ENCODE measurements at regions of chr12 and their contacts with region 1.

Region 1: GRCh38 chr12:14716848-14717444 is 20.5 kb upstream of the GUCY2C start:
- DNase-seq: peak; percentile 52
- H3K4me3 ChIP-seq: no peak overlapping the region
- H3K27ac ChIP-seq: no peak overlapping the region
- H3K4me1 ChIP-seq: no peaks in the 10 kb centered on the region
- H3K27me3 ChIP-seq: peaks cover 0 to 5% of the 10 kb centered on the region in 2 experiments
- CTCF ChIP-seq: peak; percentile 41 to 54
- POLR2A ChIP-seq: no peak

Region 2: DNA sequence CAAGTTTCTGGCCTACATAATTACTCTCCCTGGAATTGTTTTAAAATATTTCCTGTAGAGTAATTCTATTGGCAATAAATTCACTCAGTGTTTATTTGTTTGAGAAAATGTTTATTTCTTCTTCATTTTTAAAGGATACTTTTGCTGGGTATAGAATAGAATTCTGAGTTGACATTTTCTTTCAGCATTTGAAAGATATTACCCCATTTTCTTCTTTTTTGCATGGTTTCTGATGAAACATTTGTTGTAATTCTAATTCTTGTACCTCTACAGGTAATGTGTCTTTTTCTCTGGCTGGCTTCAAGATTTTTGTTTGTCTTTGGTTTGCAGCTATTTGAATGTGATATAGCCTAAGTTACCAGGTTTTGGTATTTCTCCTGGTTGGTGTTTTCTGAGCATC is 376.6 kb before region 1 on chr12:
- CTCF ChIA-PET with region 1: no interaction called
- POLR2A ChIA-PET with region 1: no interaction called
- dilution Hi-C with region 1: no loop called
- intact Hi-C with region 1: no loop called
- DNase-seq: no peak
- H3K4me3 ChIP-seq: no peak overlapping the region
- H3K27ac ChIP-seq: no peak overlapping the region
- H3K4me1 ChIP-seq: no peaks in the 10 kb centered on the region
- H3K27me3 ChIP-seq: no peaks in the 10 kb centered on the region
- CTCF ChIP-seq: no peak
- POLR2A ChIP-seq: no peak

Region 3: GRCh38 chr12:14629832-14630710 is 86.9 kb before region 1 on chr12:
- CTCF ChIA-PET with region 1: interaction called, 11 read pairs
- POLR2A ChIA-PET with region 1: no interaction called
- dilution Hi-C with region 1: no loop called
- intact Hi-C with region 1: loop called (anchors 1 kb)
- DNase-seq: peak; percentile 70
- H3K4me3 ChIP-seq: no peak overlapping the region
- H3K27ac ChIP-seq: no peak overlapping the region
- H3K4me1 ChIP-seq: no peaks in the 10 kb centered on the region
- H3K27me3 ChIP-seq: peaks cover 2 to 6% of the 10 kb centered on the region in 2 experiments
- CTCF ChIP-seq: peak; percentile 86 to 91
- POLR2A ChIP-seq: no peak